ENCODE measurements at regions of chr7 and their contacts with region 1.

Region 1: GRCh38 chr7:128883622-128884501 is 21.2 kb downstream of the ATP6V1F start:
- DNase-seq: peak; percentile 75 to 82 (median 76)
- H3K4me3 ChIP-seq: no peak overlapping the region
- H3K4me3 Mint-ChIP-seq: peak overlapping the region in 5 of 8 donors; percentile 11 to 49 (median 31)
- H3K27ac ChIP-seq: no peak overlapping the region
- H3K27ac Mint-ChIP-seq: peak overlapping the region in 3 of 7 donors; percentile 38 to 69 (median 66)
- H3K4me1 ChIP-seq: no peaks in the 10 kb centered on the region
- H3K4me1 Mint-ChIP-seq: peaks cover 0 to 4% (median 2%) of the 10 kb centered on the region in 4 donors
- H3K27me3 ChIP-seq: no peaks in the 10 kb centered on the region
- H3K27me3 Mint-ChIP-seq: peaks cover 1 to 5% of the 10 kb centered on the region in 2 donors

Region 2: DNA sequence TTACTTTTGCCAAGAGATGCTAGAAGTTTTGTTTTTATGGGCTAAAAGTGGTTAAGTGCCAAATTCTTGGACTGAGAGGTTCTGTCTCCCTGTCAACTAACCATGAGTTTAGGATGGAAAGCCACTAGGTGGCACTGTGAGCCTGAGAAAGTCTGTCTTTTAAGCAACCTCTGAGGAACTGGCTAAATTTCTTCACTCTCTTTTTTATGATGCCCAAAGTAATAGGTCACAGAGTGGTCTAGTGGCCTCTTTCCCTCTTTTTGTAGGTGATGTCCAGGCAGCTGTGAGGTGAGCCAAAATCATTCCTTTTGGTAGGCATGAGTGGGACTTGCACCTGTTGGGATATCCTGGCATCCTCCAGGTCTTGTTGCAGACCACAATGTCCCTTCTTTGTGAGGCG is 1175.1 kb before region 1 on chr7:
- CTCF ChIA-PET with region 1: no interaction called
- POLR2A ChIA-PET with region 1: no interaction called
- intact Hi-C with region 1: no loop called
- DNase-seq: peak; percentile 61 to 71 (median 64)
- H3K4me3 ChIP-seq: no peak overlapping the region
- H3K4me3 Mint-ChIP-seq: no peak overlapping the region
- H3K27ac ChIP-seq: no peak overlapping the region
- H3K27ac Mint-ChIP-seq: no peak overlapping the region
- H3K4me1 ChIP-seq: no peaks in the 10 kb centered on the region
- H3K4me1 Mint-ChIP-seq: peaks cover 0 to 6% (median 2%) of the 10 kb centered on the region in 4 donors
- H3K27me3 ChIP-seq: no peaks in the 10 kb centered on the region
- H3K27me3 Mint-ChIP-seq: no peaks in the 10 kb centered on the region

Region 3: GRCh38 chr7:128739048-128739962 is 144.6 kb before region 1 on chr7 and contains the start of gene CALU:
- CTCF ChIA-PET with region 1: interaction called, 14 read pairs
- POLR2A ChIA-PET with region 1: no interaction called
- intact Hi-C with region 1: no loop called
- DNase-seq: peak; percentile 93 to 95 (median 94)
- H3K4me3 ChIP-seq: peak within 1 kb of the TSS; percentile 80 to 82
- H3K4me3 Mint-ChIP-seq: peak within 1 kb of the TSS; percentile 98 to 100 (median 99)
- H3K27ac ChIP-seq: peak within 1 kb of the TSS; percentile 91
- H3K27ac Mint-ChIP-seq: peak within 1 kb of the TSS; percentile 97 to 100 (median 98)
- H3K4me1 ChIP-seq: peaks cover 38% of the 10 kb centered on the region
- H3K4me1 Mint-ChIP-seq: peaks cover 27 to 50% (median 39%) of the 10 kb centered on the region in 4 donors
- H3K27me3 ChIP-seq: no peaks in the 10 kb centered on the region
- H3K27me3 Mint-ChIP-seq: peaks cover 0 to 3% of the 10 kb centered on the region in 2 donors
- total RNA-seq, gene CALU: 18.4 to 20.6 TPM

Region 4: DNA sequence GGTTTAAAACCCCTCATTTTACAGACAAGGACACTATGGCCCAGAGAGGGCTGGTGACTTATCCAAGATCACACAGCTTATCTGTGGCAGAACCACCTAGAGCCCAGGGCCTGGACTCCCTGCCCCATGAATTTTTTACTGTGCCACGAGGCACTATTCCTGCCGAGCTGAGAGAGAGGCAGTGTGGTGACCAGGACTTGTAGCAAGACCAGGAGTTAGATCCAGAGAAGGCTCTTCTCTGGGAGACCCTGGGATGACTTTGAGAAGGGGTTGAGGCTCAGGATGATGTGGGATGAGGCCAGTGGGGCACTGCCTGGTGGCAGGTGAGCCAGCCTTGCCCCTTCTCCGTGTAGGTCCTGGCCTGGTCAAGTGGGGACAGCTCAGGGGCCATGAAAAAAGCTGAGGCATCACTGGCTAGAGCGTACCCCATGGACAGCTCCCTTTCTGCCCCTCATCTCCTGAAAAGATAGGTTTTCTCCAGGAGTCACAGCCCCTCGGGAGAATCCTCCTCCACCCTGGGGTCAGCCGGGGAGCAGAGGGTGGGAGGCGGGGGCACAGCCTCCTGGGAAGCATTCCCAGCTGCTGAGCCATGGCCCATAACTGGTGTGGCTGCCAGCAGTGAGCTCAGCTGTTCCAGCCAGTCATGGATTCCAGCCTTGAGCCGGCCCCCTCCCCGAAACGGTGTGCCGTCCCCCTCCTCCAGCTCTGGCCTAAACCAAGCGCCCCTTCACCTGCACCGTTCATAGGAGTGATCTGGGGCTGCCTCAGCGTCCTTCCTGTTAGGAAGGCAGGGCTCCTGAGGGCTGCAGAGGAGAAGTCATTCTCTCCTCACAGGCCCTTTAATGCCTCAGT is 47.8 kb before region 1 on chr7:
- CTCF ChIA-PET with region 1: interaction called, 68 read pairs
- POLR2A ChIA-PET with region 1: no interaction called
- intact Hi-C with region 1: no loop called
- DNase-seq: no peak
- H3K4me3 ChIP-seq: no peak overlapping the region
- H3K4me3 Mint-ChIP-seq: no peak overlapping the region
- H3K27ac ChIP-seq: no peak overlapping the region
- H3K27ac Mint-ChIP-seq: no peak overlapping the region
- H3K4me1 ChIP-seq: peaks cover 3% of the 10 kb centered on the region
- H3K4me1 Mint-ChIP-seq: peaks cover 0 to 4% (median 0%) of the 10 kb centered on the region in 4 donors
- H3K27me3 ChIP-seq: no peaks in the 10 kb centered on the region
- H3K27me3 Mint-ChIP-seq: peaks cover 3% of the 10 kb centered on the region in 2 donors

Region 5: DNA sequence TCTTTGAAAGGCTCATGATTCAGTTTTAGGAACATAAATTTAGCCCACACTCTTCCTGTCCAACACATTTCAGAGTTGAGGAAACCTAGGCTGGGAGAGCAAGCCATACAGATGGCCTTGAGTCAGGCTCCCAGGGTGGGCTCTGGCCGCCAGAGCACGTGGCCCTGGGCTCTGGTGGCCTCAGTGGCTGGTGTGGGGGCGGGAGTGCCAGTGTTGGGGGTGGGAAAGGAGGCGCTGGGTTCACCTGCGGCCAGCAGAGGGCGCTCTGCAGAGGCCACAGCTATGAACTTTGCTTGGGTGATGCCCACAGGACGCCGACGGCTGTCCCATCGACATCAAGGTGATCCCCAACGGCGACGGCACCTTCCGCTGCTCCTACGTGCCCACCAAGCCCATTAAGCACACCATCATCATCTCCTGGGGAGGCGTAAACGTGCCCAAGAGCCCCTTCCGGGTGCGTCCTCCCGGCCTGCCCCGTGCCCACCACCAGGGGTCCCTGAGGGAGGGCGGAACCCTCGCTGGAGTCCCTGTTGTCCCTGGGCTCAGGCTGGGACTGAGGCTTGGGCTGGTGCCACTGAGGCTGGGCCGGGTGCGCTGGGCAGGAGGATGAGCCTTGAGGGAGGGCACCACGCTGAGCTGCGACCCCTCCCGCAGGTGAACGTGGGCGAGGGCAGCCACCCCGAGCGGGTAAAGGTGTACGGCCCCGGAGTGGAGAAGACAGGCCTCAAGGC is 41.8 kb before region 1 on chr7:
- CTCF ChIA-PET with region 1: interaction called, 68 read pairs
- POLR2A ChIA-PET with region 1: interaction called, 4 read pairs
- intact Hi-C with region 1: loop called (anchors 1 kb)
- DNase-seq: peak in 4 of 5 donors; percentile 47 to 58 (median 50)
- H3K4me3 ChIP-seq: no peak overlapping the region
- H3K4me3 Mint-ChIP-seq: no peak overlapping the region
- H3K27ac ChIP-seq: no peak overlapping the region
- H3K27ac Mint-ChIP-seq: peak overlapping the region in 1 of 7 donors; percentile 37
- H3K4me1 ChIP-seq: no peaks in the 10 kb centered on the region
- H3K4me1 Mint-ChIP-seq: peaks cover 0 to 4% (median 0%) of the 10 kb centered on the region in 4 donors
- H3K27me3 ChIP-seq: no peaks in the 10 kb centered on the region
- H3K27me3 Mint-ChIP-seq: no peaks in the 10 kb centered on the region

Region 6: GRCh38 chr7:128862571-128863432 is 21.1 kb before region 1 on chr7 and contains the start of gene ATP6V1F:
- CTCF ChIA-PET with region 1: interaction called, 61 read pairs
- POLR2A ChIA-PET with region 1: interaction called, 3 read pairs
- intact Hi-C with region 1: no loop called
- DNase-seq: peak; percentile 98 to 100 (median 99)
- H3K4me3 ChIP-seq: peak within 1 kb of the TSS; percentile 61 to 89
- H3K4me3 Mint-ChIP-seq: peak within 1 kb of the TSS; percentile 95 to 100 (median 98)
- H3K27ac ChIP-seq: peak within 1 kb of the TSS; percentile 79
- H3K27ac Mint-ChIP-seq: peak within 1 kb of the TSS; percentile 90 to 100 (median 97)
- H3K4me1 ChIP-seq: peaks cover 20% of the 10 kb centered on the region
- H3K4me1 Mint-ChIP-seq: peaks cover 21 to 42% (median 31%) of the 10 kb centered on the region in 4 donors
- H3K27me3 ChIP-seq: no peaks in the 10 kb centered on the region
- H3K27me3 Mint-ChIP-seq: no peaks in the 10 kb centered on the region
- total RNA-seq, gene ATP6V1F: 74.6 to 75.5 TPM

Region 7: GRCh38 chr7:128869138-128869943 is 14.5 kb before region 1 on chr7:
- CTCF ChIA-PET with region 1: interaction called, 61 read pairs
- POLR2A ChIA-PET with region 1: interaction called, 3 read pairs
- intact Hi-C with region 1: loop called (anchors 1 kb)
- DNase-seq: peak in 4 of 5 donors; percentile 32 to 51 (median 49)
- H3K4me3 ChIP-seq: peak overlapping the region in 1 of 2 donors; percentile 52
- H3K4me3 Mint-ChIP-seq: peak overlapping the region; percentile 21 to 75 (median 66)
- H3K27ac ChIP-seq: no peak overlapping the region
- H3K27ac Mint-ChIP-seq: no peak overlapping the region
- H3K4me1 ChIP-seq: peaks cover 13% of the 10 kb centered on the region
- H3K4me1 Mint-ChIP-seq: peaks cover 11 to 33% (median 19%) of the 10 kb centered on the region in 4 donors
- H3K27me3 ChIP-seq: no peaks in the 10 kb centered on the region
- H3K27me3 Mint-ChIP-seq: no peaks in the 10 kb centered on the region

Region 8: DNA sequence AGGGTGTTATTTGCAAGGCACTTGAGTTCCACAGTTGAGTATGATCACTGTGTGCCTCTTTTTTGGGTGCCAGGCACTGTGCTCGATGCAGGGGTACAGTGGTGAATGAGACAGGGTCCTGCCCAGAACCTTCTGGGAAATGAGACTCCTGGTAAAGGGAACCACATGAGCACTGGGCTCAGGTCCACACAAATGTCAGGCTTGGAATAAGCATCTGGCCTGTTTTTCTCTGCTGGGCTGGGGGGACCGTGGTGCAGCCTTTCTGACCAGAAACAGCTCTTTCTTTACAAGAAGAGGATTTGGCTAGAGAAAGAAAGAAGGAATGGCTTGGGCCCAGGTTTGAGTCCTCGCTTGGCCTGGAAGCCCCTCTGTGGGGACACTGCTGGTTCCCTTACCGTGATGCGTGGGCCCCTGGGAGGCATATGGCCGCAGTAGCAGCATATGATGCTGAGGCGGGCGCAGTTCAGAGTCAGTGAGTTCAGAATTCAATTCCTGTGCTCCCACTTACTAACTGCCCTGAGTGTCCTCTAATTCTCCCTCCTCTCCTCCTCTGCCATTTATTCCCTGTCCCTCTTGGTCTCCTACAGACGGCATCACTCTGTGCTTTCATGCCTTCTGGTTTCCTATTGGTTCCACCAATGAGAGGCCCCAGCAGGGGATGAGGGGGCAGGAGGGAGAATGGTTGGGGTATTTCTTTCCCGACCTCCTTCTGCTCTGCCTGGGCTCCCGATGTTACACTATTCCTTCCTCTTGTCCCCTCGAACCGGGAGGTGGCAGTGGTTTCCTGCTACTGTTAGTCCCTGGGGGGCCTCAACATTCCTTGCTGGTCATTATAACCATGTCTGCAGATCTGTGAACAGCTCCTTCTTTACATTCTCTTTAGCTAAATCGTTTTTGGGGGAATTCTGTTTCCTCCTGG is 36.3 kb after region 1 on chr7:
- CTCF ChIA-PET with region 1: no interaction called
- POLR2A ChIA-PET with region 1: no interaction called
- intact Hi-C with region 1: no loop called
- DNase-seq: no peak
- H3K4me3 ChIP-seq: no peak overlapping the region
- H3K4me3 Mint-ChIP-seq: no peak overlapping the region
- H3K27ac ChIP-seq: no peak overlapping the region
- H3K27ac Mint-ChIP-seq: no peak overlapping the region
- H3K4me1 ChIP-seq: no peaks in the 10 kb centered on the region
- H3K4me1 Mint-ChIP-seq: peaks cover 4 to 5% (median 5%) of the 10 kb centered on the region in 4 donors
- H3K27me3 ChIP-seq: no peaks in the 10 kb centered on the region
- H3K27me3 Mint-ChIP-seq: peaks cover 19 to 27% of the 10 kb centered on the region in 2 donors

Region 9: DNA sequence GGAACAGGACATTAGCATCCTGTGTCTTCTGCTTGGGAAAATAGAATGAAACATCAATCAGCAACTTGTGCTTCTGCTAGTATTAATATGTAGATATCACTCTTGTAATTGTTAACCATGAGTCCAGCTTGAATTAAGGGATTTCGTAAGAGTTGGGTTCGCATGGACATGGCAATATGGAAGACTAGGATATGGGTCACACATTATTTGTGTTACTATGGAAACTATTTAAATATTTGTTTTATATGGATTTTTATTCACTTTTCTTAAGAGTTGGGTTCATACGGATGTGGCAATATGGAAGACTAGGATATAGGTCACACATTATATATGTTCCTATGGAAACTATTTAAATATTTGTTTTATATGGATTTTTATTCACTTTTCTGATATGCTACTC is 146.6 kb after region 1 on chr7:
- CTCF ChIA-PET with region 1: no interaction called
- POLR2A ChIA-PET with region 1: no interaction called
- intact Hi-C with region 1: no loop called
- DNase-seq: no peak
- H3K4me3 ChIP-seq: no peak overlapping the region
- H3K4me3 Mint-ChIP-seq: no peak overlapping the region
- H3K27ac ChIP-seq: no peak overlapping the region
- H3K27ac Mint-ChIP-seq: no peak overlapping the region
- H3K4me1 ChIP-seq: no peaks in the 10 kb centered on the region
- H3K4me1 Mint-ChIP-seq: peaks cover 37 to 54% (median 42%) of the 10 kb centered on the region in 4 donors
- H3K27me3 ChIP-seq: no peaks in the 10 kb centered on the region
- H3K27me3 Mint-ChIP-seq: no peaks in the 10 kb centered on the region